Breast epithelium (tissue), 4 donors: ENCODE measurements at regions of chr12 and their contacts with region 1.

Region 1: GRCh38 chr12:69627501-69627900 is 16.8 kb upstream of the LRRC10 start:
- DNase-seq: no peak
- H3K4me3 ChIP-seq: no peak overlapping the region
- H3K27ac ChIP-seq: no peak overlapping the region
- H3K4me1 ChIP-seq: no peaks in the 10 kb centered on the region
- H3K27me3 ChIP-seq: no peaks in the 10 kb centered on the region
- CTCF ChIP-seq: no peak
- POLR2A ChIP-seq: no peak

Region 2: DNA sequence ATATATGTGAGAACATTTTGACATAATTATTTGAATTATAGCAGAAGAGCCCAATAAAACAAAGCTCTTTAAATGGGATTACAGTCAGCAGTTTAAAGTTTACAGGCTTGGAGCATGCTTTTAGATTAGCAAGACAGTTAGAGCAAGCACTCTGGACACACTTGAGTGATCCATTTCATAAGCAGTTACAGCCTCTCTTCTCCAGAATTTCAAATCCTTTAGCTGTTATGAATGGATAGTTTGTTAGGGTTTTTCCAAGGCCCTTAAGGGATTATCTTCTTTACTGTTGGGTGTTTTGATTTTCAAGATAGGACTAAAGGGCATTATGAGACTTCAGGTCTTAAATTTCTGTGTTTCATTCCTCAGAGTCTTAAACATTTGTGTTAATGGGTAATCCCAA is 35.3 kb after region 1 on chr12:
- intact Hi-C with region 1: no loop called
- DNase-seq: no peak
- H3K4me3 ChIP-seq: no peak overlapping the region
- H3K27ac ChIP-seq: no peak overlapping the region
- H3K4me1 ChIP-seq: no peaks in the 10 kb centered on the region
- H3K27me3 ChIP-seq: no peaks in the 10 kb centered on the region
- CTCF ChIP-seq: no peak
- POLR2A ChIP-seq: no peak

Region 3: DNA sequence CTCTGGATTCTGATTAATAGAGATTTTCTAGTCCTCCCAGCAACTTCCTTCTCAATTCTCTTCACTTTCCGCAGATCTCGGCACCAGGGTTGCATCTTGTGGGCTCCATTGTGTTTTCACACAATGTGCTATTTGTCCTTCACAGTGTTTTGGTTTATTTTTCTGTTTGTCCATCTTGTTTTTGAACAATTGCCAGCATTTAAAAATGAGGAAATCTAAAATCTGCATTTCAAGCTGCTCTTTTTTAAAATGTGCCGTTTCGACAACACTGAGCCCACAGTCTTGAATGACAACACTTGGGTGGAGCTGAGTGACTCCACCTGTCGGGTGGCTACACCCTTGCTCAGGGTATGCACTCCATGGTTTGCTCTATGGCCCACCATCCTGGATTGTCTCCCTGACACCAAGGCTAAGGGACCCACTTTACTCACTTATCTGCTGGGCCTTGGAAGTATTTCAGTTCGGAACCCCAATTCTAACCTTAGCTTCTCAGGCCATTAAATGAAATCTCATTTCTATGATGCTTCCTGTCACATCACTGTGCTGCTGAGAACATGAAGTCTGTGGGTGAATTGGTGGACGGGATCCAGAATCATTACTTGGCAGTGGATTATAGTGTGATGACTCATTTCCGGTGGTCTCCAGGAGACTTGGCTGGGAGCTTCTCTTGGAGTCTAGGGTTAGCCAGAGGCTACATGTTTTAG is 194.1 kb after region 1 on chr12:
- intact Hi-C with region 1: loop called (anchors 5 kb)
- DNase-seq: no peak
- H3K4me3 ChIP-seq: no peak overlapping the region
- H3K27ac ChIP-seq: no peak overlapping the region
- H3K4me1 ChIP-seq: peaks cover 2 to 3% of the 10 kb centered on the region in 2 donors
- H3K27me3 ChIP-seq: no peaks in the 10 kb centered on the region
- CTCF ChIP-seq: no peak
- POLR2A ChIP-seq: no peak

Region 4: GRCh38 chr12:69916544-69917235 is 289.2 kb after region 1 on chr12:
- intact Hi-C with region 1: loop called (anchors 5 kb)
- DNase-seq: no peak
- H3K4me3 ChIP-seq: peak overlapping the region in 1 of 3 donors; percentile 9
- H3K27ac ChIP-seq: peak overlapping the region; percentile 40 to 73
- H3K4me1 ChIP-seq: no peaks in the 10 kb centered on the region
- H3K27me3 ChIP-seq: no peaks in the 10 kb centered on the region
- CTCF ChIP-seq: no peak
- POLR2A ChIP-seq: no peak